CD8-positive, alpha-beta T cell (primary cell): ENCODE measurements at regions of chr17 and their contacts with region 1.

Region 1: GRCh38 chr17:50816771-50817751 is 18.3 kb upstream of the WFIKKN2 start:
- DNase-seq: peak; percentile 32 to 78 (median 60)
- ATAC-seq: peak; percentile 52
- H3K4me3 ChIP-seq: no peak overlapping the region
- H3K4me3 Mint-ChIP-seq: no peak overlapping the region
- H3K27ac ChIP-seq: no peak overlapping the region
- H3K27ac Mint-ChIP-seq: no peak overlapping the region
- H3K4me1 ChIP-seq: no peaks in the 10 kb centered on the region
- H3K4me1 Mint-ChIP-seq: no peaks in the 10 kb centered on the region
- H3K27me3 ChIP-seq: peaks cover 0 to 2% of the 10 kb centered on the region in 2 experiments
- H3K27me3 Mint-ChIP-seq: peaks cover 17% of the 10 kb centered on the region
- CTCF ChIP-seq: peak; percentile 75

Region 2: DNA sequence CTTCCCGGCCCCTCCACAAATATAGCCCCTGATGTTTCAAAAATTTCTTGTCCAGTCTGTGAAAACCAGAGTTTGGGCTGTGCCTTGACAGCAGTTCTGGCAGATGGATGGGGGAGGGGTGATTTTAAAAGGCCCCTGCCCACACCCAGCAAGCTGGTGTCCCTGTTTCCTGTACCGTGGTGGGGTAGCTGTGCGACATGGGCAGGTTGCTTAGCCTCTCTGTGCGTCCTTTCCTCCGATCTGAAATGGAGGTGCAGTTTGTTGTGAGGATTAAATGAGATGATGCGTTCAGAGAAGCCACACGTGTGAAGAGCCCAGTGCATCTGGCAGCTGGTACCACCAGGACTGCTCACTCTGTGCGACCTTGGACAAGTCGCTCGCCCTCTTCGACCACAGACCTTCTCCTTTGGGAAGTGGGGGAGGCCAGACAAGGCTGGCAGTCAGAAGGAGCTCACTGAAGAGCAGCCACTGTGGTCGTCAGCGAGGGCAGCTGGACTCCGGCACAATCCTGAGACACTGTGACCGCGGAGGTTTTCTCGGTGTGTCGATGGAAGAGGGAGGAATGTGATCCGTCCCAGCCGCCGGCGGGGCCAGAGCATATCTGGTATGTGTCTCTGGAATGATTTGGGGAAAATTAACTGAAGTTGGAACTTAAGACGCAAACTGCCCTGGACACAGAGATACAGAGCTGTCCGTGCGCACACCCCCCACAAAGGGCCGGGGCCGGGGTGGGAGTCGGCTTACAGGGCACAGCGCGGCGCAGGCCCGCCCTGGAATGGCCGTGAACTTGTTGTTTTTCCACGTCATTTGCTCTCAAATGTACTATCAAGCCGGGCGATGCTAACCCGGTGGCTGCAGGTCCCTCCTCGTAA is 17.6 kb after region 1 on chr17:
- CTCF ChIA-PET with region 1: interaction called, 19 read pairs
- POLR2A ChIA-PET with region 1: no interaction called
- intact Hi-C with region 1: no loop called
- DNase-seq: no peak
- ATAC-seq: no peak
- H3K4me3 ChIP-seq: no peak overlapping the region
- H3K4me3 Mint-ChIP-seq: no peak overlapping the region
- H3K27ac ChIP-seq: no peak overlapping the region
- H3K27ac Mint-ChIP-seq: no peak overlapping the region
- H3K4me1 ChIP-seq: no peaks in the 10 kb centered on the region
- H3K4me1 Mint-ChIP-seq: no peaks in the 10 kb centered on the region
- H3K27me3 ChIP-seq: no peaks in the 10 kb centered on the region
- H3K27me3 Mint-ChIP-seq: peaks cover 5% of the 10 kb centered on the region
- CTCF ChIP-seq: no peak

Region 3: DNA sequence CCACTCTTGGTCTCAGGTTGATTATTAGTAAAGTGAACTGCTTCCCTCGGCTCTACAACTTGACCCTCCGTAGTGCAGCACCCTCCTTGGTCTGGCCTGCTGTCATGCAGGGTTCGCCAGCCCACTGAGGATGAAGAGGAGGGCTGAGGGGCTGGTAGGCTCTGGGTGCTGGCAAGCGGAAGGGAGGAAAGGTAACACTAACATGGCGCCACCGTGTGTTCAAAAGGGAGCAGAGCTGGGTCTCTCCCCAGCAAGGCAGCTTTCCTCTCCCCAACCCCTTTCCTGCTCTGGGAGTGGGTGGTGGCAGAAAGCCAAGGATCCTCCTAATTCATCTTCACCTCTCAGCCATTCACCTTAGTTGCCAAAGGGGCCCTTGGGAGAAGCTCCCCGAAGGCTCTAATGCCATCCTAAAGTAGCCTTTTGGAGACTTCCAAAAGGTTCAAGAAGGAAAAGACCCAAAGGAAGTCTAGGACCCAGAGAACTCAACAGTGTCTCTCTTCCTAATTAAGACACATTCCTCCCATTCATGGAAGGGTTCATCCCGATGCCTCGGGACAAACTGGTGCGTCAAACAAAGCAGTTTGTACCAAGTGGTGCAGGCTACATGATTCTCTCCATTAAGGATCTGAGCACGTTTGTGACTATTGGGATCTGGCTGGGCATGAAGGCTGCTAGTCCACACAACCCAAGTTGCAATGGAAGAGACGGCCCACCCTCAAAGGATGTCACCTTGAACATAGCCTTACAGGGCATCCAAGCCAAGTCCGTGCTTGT is 139.9 kb after region 1 on chr17:
- CTCF ChIA-PET with region 1: interaction called, 21 read pairs
- POLR2A ChIA-PET with region 1: no interaction called
- intact Hi-C with region 1: loop called (anchors 1 kb)
- DNase-seq: peak; percentile 39 to 81 (median 71)
- ATAC-seq: peak; percentile 93
- H3K4me3 ChIP-seq: no peak overlapping the region
- H3K4me3 Mint-ChIP-seq: no peak overlapping the region
- H3K27ac ChIP-seq: no peak overlapping the region
- H3K27ac Mint-ChIP-seq: no peak overlapping the region
- H3K4me1 ChIP-seq: peaks cover 4% of the 10 kb centered on the region
- H3K4me1 Mint-ChIP-seq: peaks cover 3% of the 10 kb centered on the region
- H3K27me3 ChIP-seq: no peaks in the 10 kb centered on the region
- H3K27me3 Mint-ChIP-seq: no peaks in the 10 kb centered on the region
- CTCF ChIP-seq: peak; percentile 79